ENCODE measurements at regions of chr4 and their contacts with region 1.

Region 1: GRCh38 chr4:38078590-38079421 is 118.6 kb downstream of the PTTG2 start:
- DNase-seq: no peak
- ATAC-seq: no peak

Region 2: GRCh38 chr4:38114386-38115150 is 35.8 kb after region 1 on chr4:
- intact Hi-C with region 1: loop called (anchors 5 kb)
- DNase-seq: no peak
- ATAC-seq: peak; percentile 29

Region 3: DNA sequence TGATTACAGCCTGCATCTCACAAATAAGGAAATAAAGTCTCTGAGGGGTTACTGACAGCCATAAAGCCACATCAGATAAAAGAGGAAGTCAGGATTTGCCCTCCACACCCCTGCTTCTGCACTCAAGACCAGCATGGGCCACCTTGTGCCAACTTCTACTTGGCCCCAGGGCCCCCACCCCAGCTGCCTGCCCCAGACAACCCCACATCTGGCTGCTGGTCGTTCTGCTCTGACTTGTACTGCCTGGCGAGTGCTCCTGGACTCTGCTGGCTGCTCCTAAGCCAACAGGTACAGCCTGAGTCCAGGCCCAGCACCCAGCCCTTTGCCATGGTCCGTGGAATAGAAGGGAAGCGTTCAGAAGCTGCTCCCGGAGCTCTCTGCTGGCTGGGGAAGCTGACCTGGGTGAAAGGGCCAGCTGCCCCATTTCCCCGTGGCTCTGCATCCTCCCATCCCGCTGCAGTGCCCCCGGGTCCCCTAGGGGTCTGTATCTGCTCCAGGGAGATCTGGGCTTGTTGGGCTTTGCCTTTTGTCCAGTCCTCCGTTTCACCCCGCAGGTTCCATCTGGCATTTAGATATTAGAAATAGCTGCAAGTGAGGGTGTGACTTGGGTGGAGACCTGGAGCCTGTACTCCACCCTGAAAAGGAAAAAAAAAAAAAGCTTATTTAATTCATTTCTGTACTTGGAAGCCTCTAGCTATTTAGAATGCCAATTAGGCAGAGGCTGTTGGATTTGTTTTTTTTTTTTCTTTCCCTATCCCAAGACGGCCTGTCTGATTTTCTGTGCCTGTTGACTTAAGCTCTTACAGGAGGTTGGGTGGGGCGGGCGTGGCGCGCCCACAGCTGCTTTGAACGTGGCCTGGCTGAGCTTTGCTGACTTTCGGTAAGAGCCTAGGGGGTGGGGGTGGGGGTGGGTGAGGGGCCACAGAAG is 76.1 kb after region 1 on chr4:
- intact Hi-C with region 1: loop called (anchors 5 kb)
- DNase-seq: peak; percentile 81
- ATAC-seq: peak; percentile 78

Region 4: GRCh38 chr4:38387348-38387747 is 308.5 kb after region 1 on chr4:
- intact Hi-C with region 1: no loop called
- DNase-seq: no peak
- ATAC-seq: peak; percentile 96

Region 5: GRCh38 chr4:38768968-38769394 is 690.2 kb after region 1 on chr4:
- intact Hi-C with region 1: no loop called
- DNase-seq: no peak
- ATAC-seq: peak; percentile 83

Measured in Right ventricle myocardium inferior (tissue), 1 donor.